ENCODE measurements at regions of chr4 and their contacts with region 1.

Region 1: DNA sequence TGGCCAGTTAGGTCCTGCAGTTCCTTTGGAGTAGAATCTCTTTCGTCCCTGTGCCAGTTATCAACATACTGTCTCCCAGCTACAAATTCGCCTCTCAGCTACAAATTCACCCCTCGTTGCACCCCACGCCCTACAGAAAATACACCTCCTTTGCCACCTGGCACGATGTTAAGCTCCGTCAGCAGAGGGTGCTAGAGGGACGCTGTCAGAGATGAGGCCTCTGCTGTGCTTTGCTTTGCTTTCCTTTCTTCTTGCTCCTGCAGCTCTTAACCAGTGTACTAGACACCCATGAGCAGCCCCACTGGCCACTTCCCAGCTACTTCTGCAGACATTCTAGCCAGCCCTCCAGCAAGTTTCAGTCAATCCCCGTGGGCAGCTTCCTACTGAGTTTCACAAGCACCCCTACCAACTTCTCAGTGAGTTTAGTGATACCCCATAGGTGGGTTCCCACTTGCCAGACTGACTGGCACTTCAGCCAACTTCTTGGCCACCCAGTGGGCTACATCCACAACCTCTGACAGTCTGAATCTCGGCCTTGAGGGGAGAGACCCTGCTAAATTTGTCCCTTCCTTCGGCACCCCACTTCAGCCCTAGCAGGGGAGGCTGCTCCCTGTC is 21.8 kb downstream of the HAUS3 start:
- DNase-seq: peak; percentile 53 to 81 (median 72)
- ATAC-seq: peak; percentile 67 to 94 (median 90)
- H3K4me3 ChIP-seq: no peak overlapping the region
- H3K27ac ChIP-seq: no peak overlapping the region
- H3K4me1 ChIP-seq: no peaks in the 10 kb centered on the region
- H3K27me3 ChIP-seq: no peaks in the 10 kb centered on the region
- CTCF ChIP-seq: peak; percentile 50 to 70 (median 65)

Region 2: GRCh38 chr4:2441393-2442174 is 221.5 kb after region 1 on chr4:
- intact Hi-C with region 1: loop called in 2 of 3 experiments (anchors 10 kb)
- DNase-seq: peak; percentile 37 to 86 (median 64)
- ATAC-seq: peak in 3 of 4 donors; percentile 88 to 98 (median 89)
- H3K4me3 ChIP-seq: no peak overlapping the region
- H3K27ac ChIP-seq: no peak overlapping the region
- H3K4me1 ChIP-seq: no peaks in the 10 kb centered on the region
- H3K27me3 ChIP-seq: no peaks in the 10 kb centered on the region
- CTCF ChIP-seq: peak; percentile 42 to 72 (median 55)